Activated naive CD4-positive, alpha-beta T cell treated with anti-CD3 and anti-CD28 coated beads for 36 hours (primary cell): ENCODE measurements at regions of chr1 and their contacts with region 1.

Region 1: GRCh38 chr1:224182866-224183590 is at the start of gene DEGS1:
- DNase-seq: peak; percentile 80
- H3K4me3 Mint-ChIP-seq: peak within 1 kb of the TSS; percentile 86
- H3K27ac Mint-ChIP-seq: peak within 1 kb of the TSS; percentile 87
- H3K4me1 Mint-ChIP-seq: peaks cover 40% of the 10 kb centered on the region
- H3K27me3 Mint-ChIP-seq: no peaks in the 10 kb centered on the region
- total RNA-seq, gene DEGS1: 9.2 to 10.1 TPM

Region 2: GRCh38 chr1:223755992-223756775 is 426.8 kb before region 1 on chr1:
- CTCF ChIA-PET with region 1: no interaction called
- intact Hi-C with region 1: no loop called
- DNase-seq: no peak
- H3K4me3 Mint-ChIP-seq: no peak overlapping the region
- H3K27ac Mint-ChIP-seq: no peak overlapping the region
- H3K4me1 Mint-ChIP-seq: no peaks in the 10 kb centered on the region
- H3K27me3 Mint-ChIP-seq: no peaks in the 10 kb centered on the region

Region 3: DNA sequence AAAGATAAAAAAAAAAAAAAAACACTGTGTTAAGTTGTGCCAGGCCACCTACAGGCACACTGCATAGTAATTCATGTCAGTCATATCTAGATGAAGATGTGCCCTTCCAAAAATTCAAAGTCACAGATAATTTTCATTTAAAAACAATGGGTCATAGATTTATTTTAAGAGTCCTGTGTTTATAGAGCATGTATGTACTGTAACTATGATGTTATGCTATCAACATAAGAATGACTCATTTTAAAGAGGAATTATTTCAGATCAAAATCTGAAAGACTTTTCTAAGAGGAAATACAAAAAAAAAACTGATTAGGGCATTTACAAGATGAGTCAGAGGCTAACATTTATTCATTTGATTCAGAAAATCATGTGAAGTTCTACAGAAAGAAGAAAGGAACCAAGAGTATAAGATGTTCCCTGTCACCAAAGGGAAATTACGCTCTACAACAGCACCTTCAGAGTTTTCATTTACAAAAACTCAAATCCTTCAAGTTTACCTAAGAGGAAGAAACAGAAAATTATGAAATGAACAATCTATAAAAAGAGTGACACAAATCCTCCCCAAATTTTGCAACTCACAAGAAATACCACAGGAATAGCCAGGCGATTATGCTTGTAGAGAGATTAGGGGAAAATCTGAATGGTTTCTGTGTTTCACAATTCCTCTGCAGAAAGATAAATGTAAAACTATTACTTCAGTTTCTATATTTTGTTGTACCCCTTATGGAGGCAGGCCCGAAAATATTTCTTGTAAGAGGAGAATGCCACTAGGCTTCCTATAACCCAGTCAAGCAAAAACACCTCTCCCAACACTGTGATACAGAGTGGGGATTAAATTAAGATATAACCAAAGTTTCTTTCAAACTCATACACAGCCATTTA is 351.0 kb before region 1 on chr1:
- CTCF ChIA-PET with region 1: no interaction called
- intact Hi-C with region 1: loop called (anchors 2 kb)
- DNase-seq: peak; percentile 14
- H3K4me3 Mint-ChIP-seq: peak overlapping the region; percentile 28
- H3K27ac Mint-ChIP-seq: peak overlapping the region; percentile 93
- H3K4me1 Mint-ChIP-seq: peaks cover 28% of the 10 kb centered on the region
- H3K27me3 Mint-ChIP-seq: no peaks in the 10 kb centered on the region

Region 4: DNA sequence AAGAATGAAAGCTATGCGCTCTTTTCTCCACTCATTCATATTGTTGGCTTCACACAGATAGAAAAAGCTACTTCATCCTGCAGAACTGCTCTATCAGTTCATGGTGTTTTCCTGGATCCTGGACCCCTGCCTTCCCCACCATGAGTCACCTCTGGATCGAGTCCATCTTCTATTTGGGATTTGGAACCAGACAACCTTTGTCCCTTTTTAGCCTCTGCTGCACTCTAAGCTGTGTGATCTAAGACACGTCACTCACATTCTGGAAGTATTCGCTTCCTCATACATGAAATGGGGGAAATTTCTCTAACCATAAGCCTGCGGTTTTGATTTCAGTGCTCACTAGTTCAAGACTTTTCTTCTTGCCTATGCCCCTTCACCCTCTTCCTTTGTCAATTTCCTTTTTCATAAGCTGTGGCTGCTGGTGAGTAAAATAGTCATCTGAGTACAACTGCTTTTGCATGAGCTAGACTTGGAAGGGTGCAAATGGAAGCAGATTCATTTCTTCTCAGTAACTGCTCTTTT is 14.1 kb before region 1 on chr1:
- CTCF ChIA-PET with region 1: interaction called, 16 read pairs
- intact Hi-C with region 1: loop called (anchors 1 kb)
- DNase-seq: peak; percentile 60
- H3K4me3 Mint-ChIP-seq: no peak overlapping the region
- H3K27ac Mint-ChIP-seq: peak overlapping the region; percentile 9
- H3K4me1 Mint-ChIP-seq: peaks cover 32% of the 10 kb centered on the region
- H3K27me3 Mint-ChIP-seq: no peaks in the 10 kb centered on the region

Region 5: GRCh38 chr1:224377676-224378006 is 194.6 kb after region 1 on chr1:
- CTCF ChIA-PET with region 1: no interaction called
- intact Hi-C with region 1: loop called (anchors 1 kb)
- DNase-seq: peak; percentile 66
- H3K4me3 Mint-ChIP-seq: no peak overlapping the region
- H3K27ac Mint-ChIP-seq: peak overlapping the region; percentile 67
- H3K4me1 Mint-ChIP-seq: peaks cover 91% of the 10 kb centered on the region
- H3K27me3 Mint-ChIP-seq: no peaks in the 10 kb centered on the region

Region 6: GRCh38 chr1:224497714-224498573 is 314.9 kb after region 1 on chr1:
- CTCF ChIA-PET with region 1: no interaction called
- intact Hi-C with region 1: loop called (anchors 1 kb)
- DNase-seq: peak; percentile 91
- H3K4me3 Mint-ChIP-seq: peak overlapping the region; percentile 54
- H3K27ac Mint-ChIP-seq: peak overlapping the region; percentile 92
- H3K4me1 Mint-ChIP-seq: peaks cover 40% of the 10 kb centered on the region
- H3K27me3 Mint-ChIP-seq: peaks cover 7% of the 10 kb centered on the region